Colonic mucosa (tissue), 4 donors: ENCODE measurements at regions of chr11 and their contacts with region 1.

Region 1: DNA sequence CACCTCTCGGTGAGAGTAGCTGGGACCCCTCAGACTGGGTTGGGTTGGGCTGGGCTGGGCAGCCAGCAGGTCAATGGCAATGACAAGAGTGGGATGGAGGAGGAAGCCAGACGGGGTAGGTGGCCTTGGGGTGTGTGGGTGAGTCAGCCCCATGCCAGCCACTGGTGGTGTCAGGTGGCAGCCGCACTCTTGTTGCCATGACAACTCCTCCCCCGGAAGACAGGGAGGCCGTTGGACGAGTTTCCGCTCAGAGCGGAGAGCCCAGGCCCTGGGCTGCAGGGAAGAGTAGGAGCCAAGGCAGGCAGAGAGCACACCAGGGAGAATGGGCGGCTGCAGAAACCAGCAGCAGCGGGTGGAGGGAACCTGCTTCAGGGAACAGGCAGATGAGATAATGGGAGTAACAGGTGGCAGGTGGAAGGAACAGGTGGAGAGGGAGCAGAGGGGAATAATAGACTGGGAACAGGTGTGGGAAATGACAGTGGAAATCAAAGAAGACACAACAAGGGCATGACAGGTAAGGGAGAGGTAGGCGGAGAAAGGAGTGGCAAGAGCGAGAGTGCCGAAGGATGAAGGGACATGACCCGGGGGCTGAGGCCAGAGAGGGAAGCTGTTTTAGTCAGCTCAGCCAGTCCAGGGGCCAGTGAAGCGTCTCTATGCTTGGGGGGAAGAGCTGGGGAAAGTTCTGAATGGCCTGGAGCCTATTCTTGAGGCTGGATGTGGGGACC is 8.6 kb downstream of the SPTBN2 start:
- DNase-seq: peak; percentile 73
- H3K4me3 ChIP-seq: no peak overlapping the region
- H3K27ac ChIP-seq: no peak overlapping the region
- H3K4me1 ChIP-seq: no peaks in the 10 kb centered on the region
- H3K27me3 ChIP-seq: peaks cover 1% of the 10 kb centered on the region
- CTCF ChIP-seq: no peak

Region 2: GRCh38 chr11:66743271-66743968 is 23.0 kb after region 1 on chr11:
- intact Hi-C with region 1: loop called (anchors 2 kb)
- DNase-seq: peak; percentile 91
- H3K4me3 ChIP-seq: peak overlapping the region; percentile 56
- H3K27ac ChIP-seq: peak overlapping the region; percentile 81
- H3K4me1 ChIP-seq: no peaks in the 10 kb centered on the region
- H3K27me3 ChIP-seq: no peaks in the 10 kb centered on the region
- CTCF ChIP-seq: no peak

Region 3: GRCh38 chr11:66967670-66968425 is 247.5 kb after region 1 on chr11:
- intact Hi-C with region 1: no loop called
- DNase-seq: peak; percentile 35
- H3K4me3 ChIP-seq: no peak overlapping the region
- H3K27ac ChIP-seq: peak overlapping the region; percentile 53
- H3K4me1 ChIP-seq: no peaks in the 10 kb centered on the region
- H3K27me3 ChIP-seq: no peaks in the 10 kb centered on the region
- CTCF ChIP-seq: no peak